ENCODE measurements at regions of chr2 and their contacts with region 1.

Region 1: GRCh38 chr2:232327105-232328041 is 51.2 kb upstream of the ALPP start:
- DNase-seq: peak; percentile 90
- H3K4me3 Mint-ChIP-seq: no peak overlapping the region
- H3K27ac Mint-ChIP-seq: no peak overlapping the region
- H3K4me1 Mint-ChIP-seq: peaks cover 9% of the 10 kb centered on the region
- H3K27me3 Mint-ChIP-seq: no peaks in the 10 kb centered on the region

Region 2: DNA sequence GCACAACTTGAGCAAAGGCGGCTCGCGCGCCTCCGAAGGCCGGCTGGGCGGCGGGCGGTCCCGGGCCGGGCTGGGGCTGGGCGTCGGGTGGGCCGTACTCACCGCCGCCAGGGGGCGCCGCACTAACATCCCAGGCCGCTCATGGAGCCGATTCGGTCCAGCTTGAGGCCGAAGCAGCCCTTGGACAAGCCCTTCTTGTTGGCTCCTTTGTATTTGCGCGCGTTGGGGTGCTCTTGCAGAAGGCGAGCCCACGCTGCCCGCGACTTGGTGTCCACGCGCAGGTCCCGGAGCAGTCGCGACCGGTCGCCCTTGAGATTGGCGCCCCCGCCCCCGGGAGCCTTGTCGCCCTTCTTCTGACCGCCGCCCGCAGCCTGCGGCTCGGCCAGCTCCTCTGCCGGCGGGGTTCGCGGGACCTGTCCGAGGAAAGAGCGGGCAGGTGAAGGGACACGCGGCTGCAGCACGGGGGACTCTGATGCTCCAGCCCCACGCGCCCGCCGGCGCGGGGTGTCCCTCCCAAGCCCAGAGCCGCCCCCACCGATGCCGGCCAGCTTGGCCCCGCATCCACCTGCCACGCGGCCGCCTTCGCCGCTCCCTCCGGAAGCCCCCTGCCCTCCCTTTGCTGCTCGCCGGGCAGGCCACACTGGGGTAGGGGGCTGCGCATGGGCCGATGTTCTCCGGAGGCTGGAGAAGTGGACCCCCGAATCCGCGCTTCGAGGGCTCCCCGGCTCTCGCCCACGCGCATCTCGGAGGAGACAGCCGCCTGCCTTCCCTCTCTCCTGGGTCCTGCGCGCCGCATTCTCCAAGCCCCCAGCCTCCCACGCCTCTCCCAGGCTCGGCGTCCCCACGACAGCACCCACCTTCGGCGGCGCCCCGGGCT is 401.8 kb before region 1 on chr2:
- CTCF ChIA-PET with region 1: interaction called, 27 read pairs
- POLR2A ChIA-PET with region 1: no interaction called
- intact Hi-C with region 1: loop called (anchors 1 kb)
- DNase-seq: peak; percentile 75
- H3K4me3 Mint-ChIP-seq: peak overlapping the region; percentile 26
- H3K27ac Mint-ChIP-seq: no peak overlapping the region
- H3K4me1 Mint-ChIP-seq: peaks cover 10% of the 10 kb centered on the region
- H3K27me3 Mint-ChIP-seq: peaks cover 54% of the 10 kb centered on the region

Region 3: DNA sequence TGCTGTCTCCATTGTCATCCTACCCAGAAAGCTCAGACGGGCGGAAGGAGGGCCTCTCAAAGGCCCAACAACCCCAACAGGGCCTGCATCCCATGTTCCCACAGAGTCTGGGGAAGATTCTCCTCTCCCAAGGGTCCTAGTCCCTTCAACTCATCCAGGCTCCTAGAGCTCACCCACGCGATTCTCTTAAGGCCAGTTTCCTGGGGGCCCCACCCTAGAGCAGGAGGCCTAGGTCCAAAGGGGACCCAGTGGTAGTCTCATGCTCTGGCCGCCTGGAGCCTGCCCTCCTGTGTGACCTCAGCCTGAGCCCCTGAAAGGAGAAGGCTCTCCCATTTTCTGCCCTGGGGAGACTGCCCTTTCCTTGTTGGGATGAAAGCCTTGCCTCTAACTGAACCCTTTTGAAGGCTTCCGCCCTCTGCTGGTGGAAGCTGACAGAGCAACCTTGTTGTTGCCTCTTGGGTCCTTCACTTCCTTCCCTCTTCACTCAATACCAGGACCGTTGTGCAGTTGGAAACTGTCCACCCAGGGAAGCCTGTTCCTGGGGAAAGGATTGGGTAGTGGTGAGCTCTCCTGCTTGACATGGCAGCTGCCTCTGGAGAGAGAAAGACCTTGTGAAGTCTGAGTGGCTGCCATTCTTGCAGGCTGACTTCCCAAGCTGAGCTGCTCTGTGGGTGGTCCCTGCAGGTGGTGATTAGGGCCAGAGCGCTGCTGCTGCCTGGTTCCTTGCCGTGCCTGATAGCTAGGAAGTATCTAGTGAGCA is 34.8 kb before region 1 on chr2:
- CTCF ChIA-PET with region 1: interaction called, 49 read pairs
- POLR2A ChIA-PET with region 1: no interaction called
- intact Hi-C with region 1: loop called (anchors 2 kb)
- DNase-seq: peak; percentile 73
- H3K4me3 Mint-ChIP-seq: no peak overlapping the region
- H3K27ac Mint-ChIP-seq: no peak overlapping the region
- H3K4me1 Mint-ChIP-seq: no peaks in the 10 kb centered on the region
- H3K27me3 Mint-ChIP-seq: no peaks in the 10 kb centered on the region

Region 4: DNA sequence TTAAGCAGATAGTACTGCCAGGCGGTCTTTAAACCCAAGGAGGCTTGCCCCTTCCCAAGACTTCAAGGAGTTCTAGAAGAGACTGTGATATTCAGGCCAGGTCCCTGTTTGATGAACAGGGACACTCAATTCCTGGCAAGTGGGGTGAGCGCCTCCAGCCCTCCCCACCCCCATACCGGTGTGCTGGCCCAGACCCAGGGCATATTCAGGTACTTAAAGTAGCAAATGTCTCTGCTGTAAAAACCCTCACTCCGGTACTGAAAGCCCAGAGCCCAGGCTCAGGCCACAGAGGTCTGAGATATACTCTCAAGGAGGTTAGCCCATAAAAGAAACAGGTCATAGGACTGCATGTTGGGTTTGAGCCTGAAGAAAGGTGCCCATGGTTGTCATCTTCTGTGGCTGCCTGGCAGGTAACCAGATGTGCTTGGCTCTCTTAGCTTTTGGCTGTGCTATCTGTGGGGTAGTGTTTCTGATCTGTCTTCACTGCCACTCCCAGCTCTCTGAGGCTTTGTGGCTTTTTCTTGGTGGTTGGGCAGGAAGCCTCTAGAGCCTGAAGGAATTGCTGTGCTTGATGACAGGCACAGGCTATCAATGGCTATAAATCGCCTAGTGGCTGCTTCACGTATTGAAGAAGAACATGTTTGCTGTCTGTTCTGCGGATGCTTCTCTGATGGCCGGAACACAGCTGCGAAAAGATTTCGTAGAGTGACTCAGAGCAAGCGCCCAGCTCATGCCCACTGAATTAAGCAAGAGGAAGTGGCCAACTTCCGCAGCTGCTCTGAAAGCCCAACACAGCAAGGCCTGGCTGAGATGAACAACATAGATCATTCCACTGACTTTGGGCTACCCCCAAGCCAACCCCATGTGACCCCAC is 12.1 kb before region 1 on chr2:
- CTCF ChIA-PET with region 1: interaction called, 22 read pairs
- POLR2A ChIA-PET with region 1: no interaction called
- intact Hi-C with region 1: no loop called
- DNase-seq: peak; percentile 89
- H3K4me3 Mint-ChIP-seq: peak overlapping the region; percentile 45
- H3K27ac Mint-ChIP-seq: peak overlapping the region; percentile 89
- H3K4me1 Mint-ChIP-seq: peaks cover 76% of the 10 kb centered on the region
- H3K27me3 Mint-ChIP-seq: no peaks in the 10 kb centered on the region

Measured in activated CD4-positive, alpha-beta memory T cell treated with anti-CD3 and anti-CD28 coated beads for 36 hours (primary cell).